Panc1 (cell line): ENCODE measurements at regions of chr19 and their contacts with region 1.

Region 1: DNA sequence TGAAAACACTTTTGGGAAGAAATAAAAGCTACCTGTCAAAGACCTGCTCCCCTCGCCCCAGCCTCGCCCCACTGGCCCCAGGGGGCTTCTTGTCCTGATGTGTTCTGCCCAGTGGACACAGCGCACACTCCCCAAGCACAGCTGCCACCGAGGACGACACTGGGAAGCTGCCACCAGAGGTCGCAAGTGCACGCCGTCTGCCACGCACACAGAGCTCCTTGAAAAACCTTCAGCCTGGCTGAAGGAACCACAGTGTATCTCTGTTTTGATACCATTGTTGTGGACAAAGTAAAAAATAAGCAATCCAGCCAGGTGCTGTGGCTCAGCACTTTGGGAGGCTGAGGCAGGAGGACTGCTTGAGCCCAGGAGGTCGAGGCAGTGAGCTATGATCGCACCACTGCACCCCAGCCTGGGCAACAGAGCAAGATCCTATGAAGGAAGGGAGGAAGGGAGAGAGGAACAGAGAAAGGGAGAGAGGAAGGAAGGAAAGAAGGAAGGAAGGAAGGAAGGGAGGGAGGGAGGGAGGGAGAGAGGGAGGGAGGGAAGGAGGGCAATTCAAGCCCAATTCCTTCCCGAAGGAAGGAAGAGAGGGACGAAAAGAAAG is 57.3 kb downstream of the CEBPG start:
- DNase-seq: peak; percentile 64
- ATAC-seq: peak; percentile 95
- H3K4me3 ChIP-seq: no peak overlapping the region
- H3K27ac ChIP-seq: no peak overlapping the region
- H3K4me1 ChIP-seq: peaks cover 7% of the 10 kb centered on the region; the same call in 1 of the 2 replicates
- H3K27me3 ChIP-seq: no peaks in the 10 kb centered on the region
- CTCF ChIP-seq: peak; percentile 98

Region 2: DNA sequence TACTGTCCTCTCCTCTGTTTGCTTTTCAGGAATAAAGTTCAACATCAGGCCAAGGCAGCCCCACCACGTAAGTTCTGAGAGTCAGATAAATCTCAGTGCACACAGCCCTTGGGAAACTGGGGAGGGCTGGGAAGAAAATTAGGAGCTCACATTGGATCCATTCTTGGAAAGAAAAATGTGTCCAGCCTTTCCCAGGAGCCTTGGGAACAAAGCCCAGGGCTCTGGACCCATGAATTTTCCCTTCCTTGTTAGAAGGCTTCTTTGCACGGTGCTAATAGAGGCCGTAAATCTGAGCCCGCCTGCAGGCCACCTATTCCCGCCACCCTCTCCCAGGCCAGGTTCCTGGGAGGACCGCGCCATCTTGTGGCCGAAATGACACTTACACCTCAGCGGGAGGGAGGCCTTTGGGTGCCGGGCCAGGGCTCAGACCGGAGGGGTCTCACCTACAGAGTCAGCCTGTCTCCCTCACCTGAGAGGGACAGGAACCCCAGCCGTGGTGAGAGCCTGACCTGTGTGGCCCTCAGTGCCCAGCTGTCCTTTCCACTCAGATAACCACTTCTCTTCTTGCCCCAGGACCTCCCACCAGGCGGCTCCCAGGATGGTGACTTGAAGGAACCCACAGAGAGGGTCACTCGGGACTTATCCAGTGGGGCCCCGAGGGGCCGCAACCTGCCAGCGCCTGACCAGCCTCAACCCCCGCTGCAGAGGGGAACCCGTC is 340.8 kb after region 1 on chr19:
- CTCF ChIA-PET with region 1: interaction called, 45 read pairs
- POLR2A ChIA-PET with region 1: no interaction called
- in situ Hi-C with region 1: no loop called
- intact Hi-C with region 1: loop called (anchors 2 kb)
- DNase-seq: no peak
- ATAC-seq: peak; percentile 89
- H3K4me3 ChIP-seq: no peak overlapping the region
- H3K27ac ChIP-seq: no peak overlapping the region
- H3K4me1 ChIP-seq: no peaks in the 10 kb centered on the region
- H3K27me3 ChIP-seq: peaks cover 11% of the 10 kb centered on the region
- CTCF ChIP-seq: peak; percentile 96